AG04450 (cell line): ENCODE measurements at regions of chr9 and their contacts with region 1.

Region 1: DNA sequence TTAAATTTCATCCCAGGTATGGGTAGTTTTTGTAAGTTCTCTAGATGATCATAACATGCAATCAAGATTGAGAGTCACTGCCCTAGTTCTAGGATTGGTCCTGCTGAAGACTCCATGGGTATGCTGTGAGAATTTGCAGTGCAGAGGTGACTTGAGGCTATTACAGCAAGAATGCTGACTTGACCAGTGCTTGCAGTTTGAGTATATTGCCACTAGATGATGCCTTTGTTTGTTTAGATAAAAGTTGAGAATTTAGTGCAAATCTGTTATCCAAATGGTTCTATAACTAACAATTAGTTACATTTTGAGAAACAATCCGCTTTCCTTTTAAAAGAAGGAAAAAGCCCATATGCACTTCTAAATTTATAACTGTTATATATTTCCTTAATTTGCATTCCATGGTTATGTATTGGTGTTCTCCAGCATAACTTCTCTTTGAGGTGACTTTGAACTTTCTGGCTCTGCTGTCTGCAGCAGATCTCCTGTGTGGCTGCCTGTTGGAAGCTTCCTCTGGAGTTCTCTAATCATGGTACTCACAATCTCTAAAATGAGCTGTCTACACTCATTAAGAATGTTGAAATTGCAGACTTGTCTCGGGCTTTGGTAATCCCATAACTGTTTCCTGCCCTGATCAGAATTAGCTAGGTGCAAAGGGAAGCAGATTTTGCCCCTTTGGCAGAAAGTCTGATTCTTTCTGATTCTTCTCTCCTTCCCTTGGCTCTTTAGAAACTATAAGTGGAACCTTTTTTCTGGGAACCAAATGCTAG is 24.9 kb downstream of the MELK start:
- DNase-seq: no peak
- H3K4me3 ChIP-seq: no peak overlapping the region
- H3K27ac ChIP-seq: no peak overlapping the region
- H3K27me3 ChIP-seq: no peaks in the 10 kb centered on the region
- CTCF ChIP-seq: peak; percentile 78

Region 2: GRCh38 chr9:36584622-36585470 is 12.7 kb before region 1 on chr9:
- CTCF ChIA-PET with region 1: interaction called, 16 read pairs
- POLR2A ChIA-PET with region 1: interaction called, 3 read pairs
- DNase-seq: no peak
- H3K4me3 ChIP-seq: no peak overlapping the region
- H3K27ac ChIP-seq: peak overlapping the region; percentile 78
- H3K27me3 ChIP-seq: no peaks in the 10 kb centered on the region
- CTCF ChIP-seq: no peak

Region 3: DNA sequence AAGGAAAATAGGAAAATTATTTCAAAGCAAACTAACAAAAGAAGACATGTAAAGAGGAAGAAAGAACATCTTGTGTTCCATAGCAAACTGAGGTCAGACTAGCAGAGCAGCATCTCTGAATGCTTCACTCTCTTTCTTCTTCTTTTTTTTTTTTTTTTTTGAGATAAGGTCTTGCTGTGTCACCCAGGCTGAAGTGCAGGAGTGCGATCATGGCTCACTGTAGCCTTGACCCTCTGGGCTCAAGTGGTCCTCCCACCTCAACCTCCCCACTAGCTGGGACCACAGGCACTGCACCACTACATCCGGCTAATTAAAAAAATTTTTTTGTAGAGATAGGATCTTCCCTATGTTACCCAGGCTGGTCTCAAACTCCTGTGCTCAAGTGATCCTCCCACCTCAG is 11.7 kb after region 1 on chr9:
- CTCF ChIA-PET with region 1: interaction called, 11 read pairs
- POLR2A ChIA-PET with region 1: no interaction called
- DNase-seq: no peak
- H3K4me3 ChIP-seq: no peak overlapping the region
- H3K27ac ChIP-seq: no peak overlapping the region
- H3K27me3 ChIP-seq: no peaks in the 10 kb centered on the region
- CTCF ChIP-seq: no peak